Left cardiac atrium (tissue), 4 donors: ENCODE measurements at regions of chr2 and their contacts with region 1.

Region 1: DNA sequence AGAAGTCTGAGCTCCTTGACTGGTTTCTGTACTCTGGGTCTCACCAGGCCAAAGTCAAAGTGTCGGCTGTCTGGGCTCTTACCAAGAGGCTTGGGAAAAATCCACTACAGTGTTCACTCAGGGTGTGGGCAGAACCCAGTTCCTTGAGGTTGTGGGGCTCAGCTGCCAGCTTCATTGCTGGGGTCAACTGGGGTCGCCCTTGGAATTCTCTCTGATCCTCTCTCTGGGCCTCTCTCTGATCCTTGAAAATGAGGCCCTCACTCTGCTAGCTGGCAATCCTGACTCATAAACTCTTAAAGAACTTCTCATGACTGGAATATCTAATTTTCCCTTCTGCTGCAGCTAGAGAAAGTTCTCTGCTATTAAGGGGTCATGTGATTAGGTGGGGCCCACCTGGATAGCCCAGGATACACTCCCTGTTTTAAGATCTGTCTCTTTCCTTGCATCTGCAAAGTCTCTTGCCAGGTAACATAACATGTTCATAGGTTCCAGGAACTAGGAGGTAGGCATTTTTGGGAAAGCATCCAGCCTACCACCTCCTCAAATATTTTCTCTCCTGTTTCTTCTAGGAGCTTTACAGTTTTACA is 66.3 kb downstream of the SP110 start:
- DNase-seq: no peak
- ATAC-seq: no peak

Region 2: GRCh38 chr2:230068016-230068650 is 85.3 kb before region 1 on chr2:
- intact Hi-C with region 1: loop called (anchors 5 to 10 kb)
- DNase-seq: peak; percentile 68
- ATAC-seq: peak; percentile 65 to 73

Region 3: DNA sequence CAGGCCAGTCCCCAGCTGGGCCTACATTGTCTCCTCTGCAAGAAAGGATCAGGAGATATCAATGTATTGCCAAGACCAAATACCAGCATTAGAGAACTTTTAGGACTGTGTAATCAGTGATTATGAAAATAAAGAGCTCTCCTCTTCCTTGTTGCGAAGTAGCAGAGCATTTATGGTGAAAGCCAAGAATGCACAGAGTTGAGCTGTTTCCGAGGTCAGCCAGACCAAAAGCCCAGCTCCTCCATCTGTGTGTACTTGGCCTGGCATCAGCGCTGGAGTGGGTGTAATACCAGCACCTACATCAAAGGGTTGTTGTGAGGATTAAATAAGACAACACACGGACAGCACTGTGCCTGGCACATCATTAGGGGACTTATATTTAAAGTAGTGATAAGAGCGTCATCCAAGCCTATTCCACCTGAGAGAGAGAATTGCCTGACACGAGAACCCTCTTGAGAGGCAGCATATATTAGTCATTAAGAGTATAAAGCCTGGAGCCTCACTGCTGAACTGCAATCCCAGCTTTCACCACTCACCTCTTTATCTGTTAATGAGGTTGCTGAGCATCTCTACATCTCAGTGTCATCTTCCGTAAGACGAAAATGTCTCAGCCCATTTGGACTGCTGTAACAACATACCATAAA is 77.4 kb before region 1 on chr2:
- intact Hi-C with region 1: loop called in 1 of 2 experiments (anchors 10 kb)
- DNase-seq: no peak
- ATAC-seq: peak; percentile 53 to 80

Region 4: DNA sequence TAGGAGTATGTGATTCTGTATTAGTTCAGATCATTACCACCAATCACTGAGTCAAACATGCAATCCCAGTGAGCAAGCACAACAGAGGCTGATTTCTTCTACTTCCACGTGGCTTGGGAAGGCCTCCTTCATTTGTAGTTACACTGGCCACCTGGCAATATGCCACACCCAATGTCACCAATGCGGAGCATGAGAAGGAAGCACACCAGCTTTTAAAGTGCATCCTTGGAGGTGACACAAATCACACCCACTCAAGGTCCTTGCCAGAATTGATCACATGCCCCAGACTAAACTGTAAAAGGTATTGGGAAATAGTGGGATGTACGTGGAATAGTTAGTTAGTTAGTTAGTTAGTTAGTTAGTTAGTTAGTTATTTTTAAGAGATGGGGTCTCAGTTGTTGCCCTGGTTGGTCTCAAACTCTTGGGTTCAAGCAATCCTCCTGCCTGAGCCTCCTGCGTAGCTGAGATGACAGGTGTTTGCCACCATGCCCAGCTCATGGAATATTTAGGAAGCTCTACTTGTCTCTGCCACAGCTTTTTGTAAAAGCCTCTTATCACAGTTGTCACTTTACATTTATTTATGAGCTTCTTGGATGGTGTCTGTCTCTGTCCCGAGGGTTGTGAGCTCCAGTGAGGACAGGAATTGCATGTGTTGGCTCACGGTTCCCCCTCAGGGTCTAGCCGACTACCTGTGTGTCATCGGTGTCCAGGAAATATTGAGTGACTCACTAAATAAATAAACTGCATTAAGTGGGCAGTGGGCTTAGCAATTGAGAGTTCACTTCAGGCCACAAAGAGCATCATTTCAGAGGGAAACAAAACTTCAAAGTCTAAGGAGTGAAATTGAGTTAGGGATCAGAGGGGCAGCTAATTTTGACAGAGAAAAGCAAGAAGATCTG is 531.0 kb after region 1 on chr2:
- intact Hi-C with region 1: no loop called
- DNase-seq: peak; percentile 36
- ATAC-seq: peak in 1 of 2 donors; percentile 39